AG04450 (cell line): ENCODE measurements at regions of chr3 and their contacts with region 1.

Region 1: DNA sequence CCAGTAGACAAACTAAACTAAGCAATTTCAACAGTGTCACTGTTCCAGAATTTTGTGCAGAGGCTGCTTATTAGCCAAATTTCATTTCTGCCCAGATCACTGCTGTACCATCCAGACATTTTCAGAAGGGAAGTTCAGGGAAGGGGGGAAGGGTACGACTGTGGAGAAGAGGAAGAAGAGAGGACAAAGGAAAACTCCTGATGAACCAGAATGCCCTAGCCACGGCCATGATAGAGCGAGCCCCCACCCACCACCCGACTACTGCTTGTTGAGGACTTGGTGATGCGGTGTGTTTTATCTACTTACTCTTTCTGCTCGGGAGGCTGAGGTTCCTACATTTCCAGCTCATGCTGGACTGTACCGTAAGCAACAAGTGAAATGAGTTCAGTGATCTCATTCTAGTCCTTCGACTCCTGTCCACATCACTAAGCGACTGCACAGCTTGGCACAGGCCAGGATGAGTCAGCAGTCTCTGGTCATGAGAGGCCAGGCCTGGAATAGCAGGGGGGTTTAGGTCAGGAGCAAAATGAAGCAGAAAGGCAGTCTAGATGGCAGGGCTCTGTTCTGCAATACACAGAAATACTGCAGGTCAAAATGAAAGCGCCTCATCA is 330.8 kb downstream of the TIGIT start:
- DNase-seq: peak; percentile 92
- H3K4me3 ChIP-seq: peak overlapping the region; percentile 67
- H3K27ac ChIP-seq: peak overlapping the region; percentile 99
- H3K27me3 ChIP-seq: no peaks in the 10 kb centered on the region
- CTCF ChIP-seq: 0 out of 2 replicates have a peak, but pooled peaks have one; percentile 1

Region 2: DNA sequence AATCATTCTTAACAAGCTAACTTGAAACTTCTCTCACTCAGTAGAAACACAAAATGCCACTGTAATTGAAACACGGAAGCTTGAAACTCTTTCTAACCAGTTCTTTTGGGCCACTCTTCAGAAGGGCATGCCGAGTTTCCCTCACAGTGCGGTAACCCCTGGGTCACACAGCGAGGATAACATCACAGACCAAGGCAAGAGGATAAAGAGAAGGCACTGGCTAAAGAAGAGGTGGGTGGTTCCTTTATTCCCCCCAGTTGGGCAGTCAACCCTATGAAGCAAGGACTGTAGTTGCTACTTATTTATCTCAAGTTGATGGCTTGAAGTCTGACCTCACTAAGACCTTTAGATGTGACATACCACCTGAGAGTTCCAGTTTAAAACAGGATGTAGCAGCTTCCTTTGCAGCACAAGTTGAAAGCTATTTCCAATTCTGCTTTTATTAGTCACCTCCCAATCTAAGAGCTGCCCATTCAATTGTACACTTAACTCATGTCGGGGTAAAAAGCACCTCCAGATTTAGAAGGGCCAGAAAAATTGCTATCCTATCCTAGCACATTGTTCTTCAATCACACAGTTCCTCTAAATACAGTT is 58.4 kb before region 1 on chr3:
- CTCF ChIA-PET with region 1: no interaction called
- POLR2A ChIA-PET with region 1: no interaction called
- DNase-seq: no peak
- H3K4me3 ChIP-seq: no peak overlapping the region
- H3K27ac ChIP-seq: no peak overlapping the region
- H3K27me3 ChIP-seq: no peaks in the 10 kb centered on the region
- CTCF ChIP-seq: no peak

Region 3: GRCh38 chr3:114608293-114608692 is 16.4 kb before region 1 on chr3:
- CTCF ChIA-PET with region 1: no interaction called
- POLR2A ChIA-PET with region 1: interaction called, 12 read pairs
- DNase-seq: peak; percentile 84
- H3K4me3 ChIP-seq: no peak overlapping the region
- H3K27ac ChIP-seq: no peak overlapping the region
- H3K27me3 ChIP-seq: no peaks in the 10 kb centered on the region
- CTCF ChIP-seq: no peak

Region 4: GRCh38 chr3:114660124-114660523 is 35.4 kb after region 1 on chr3:
- CTCF ChIA-PET with region 1: no interaction called
- POLR2A ChIA-PET with region 1: no interaction called
- DNase-seq: peak; percentile 44
- H3K4me3 ChIP-seq: peak overlapping the region; percentile 34
- H3K27ac ChIP-seq: peak overlapping the region; percentile 58
- H3K27me3 ChIP-seq: no peaks in the 10 kb centered on the region
- CTCF ChIP-seq: no peak

Region 5: GRCh38 chr3:115007966-115008365 is 383.3 kb after region 1 on chr3:
- CTCF ChIA-PET with region 1: no interaction called
- POLR2A ChIA-PET with region 1: no interaction called
- DNase-seq: no peak
- H3K4me3 ChIP-seq: no peak overlapping the region
- H3K27ac ChIP-seq: no peak overlapping the region
- H3K27me3 ChIP-seq: no peaks in the 10 kb centered on the region
- CTCF ChIP-seq: no peak